Activated B cell treated with CpG ODN at 0.5 μM for 24 hours (primary cell): ENCODE measurements at regions of chr2 and their contacts with region 1.

Region 1: DNA sequence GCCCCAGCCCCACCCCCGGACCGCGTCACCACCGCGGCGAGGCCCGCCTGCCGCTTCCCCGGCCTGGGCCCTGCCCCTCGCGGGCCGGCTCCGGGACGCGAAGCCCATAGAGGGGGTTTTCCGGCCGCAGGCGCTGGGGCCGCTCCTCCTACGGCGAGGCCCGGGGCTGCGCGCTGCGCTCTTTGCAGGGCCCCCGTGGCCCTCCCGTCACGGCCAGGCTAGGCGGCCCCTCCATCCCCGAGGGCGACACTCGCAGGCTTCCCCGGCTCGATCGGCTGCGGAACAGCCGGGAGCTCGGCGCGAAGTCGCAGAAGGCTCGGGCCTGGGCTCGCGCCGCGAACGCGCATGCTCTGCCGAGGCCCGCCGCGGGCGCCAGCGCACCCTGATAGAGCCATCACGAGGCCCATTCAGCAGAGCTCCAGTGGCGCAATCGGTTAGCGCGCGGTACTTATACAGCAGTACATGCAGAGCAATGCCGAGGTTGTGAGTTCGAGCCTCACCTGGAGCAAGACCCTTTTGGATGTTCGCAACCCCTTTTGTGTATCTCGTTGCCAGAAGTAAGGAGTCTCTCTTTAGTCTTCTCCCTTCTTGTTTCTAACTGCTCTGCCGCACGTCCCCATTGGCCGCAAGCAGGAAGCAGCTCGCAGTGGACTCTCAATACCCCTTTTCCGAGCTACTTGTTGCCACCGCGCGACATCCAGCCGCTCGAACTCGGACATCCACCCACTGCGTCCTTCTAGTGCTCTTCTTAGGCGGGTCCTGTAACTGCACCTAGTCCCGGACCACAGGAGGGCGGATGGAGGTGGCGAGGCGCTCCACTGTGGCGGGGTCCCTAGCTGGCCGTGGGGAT is 18.0 kb upstream of the HAAO start:
- DNase-seq: peak; percentile 96
- ATAC-seq: peak; percentile 79
- H3K4me3 Mint-ChIP-seq: peak overlapping the region; percentile 94
- H3K27ac Mint-ChIP-seq: peak overlapping the region; percentile 99
- H3K4me1 Mint-ChIP-seq: peaks cover 26% of the 10 kb centered on the region
- H3K27me3 Mint-ChIP-seq: no peaks in the 10 kb centered on the region
- CTCF ChIP-seq: no peak

Region 2: GRCh38 chr2:41840702-41841551 is 969.4 kb before region 1 on chr2:
- CTCF ChIA-PET with region 1: no interaction called
- POLR2A ChIA-PET with region 1: no interaction called
- intact Hi-C with region 1: loop called (anchors 5 kb)
- DNase-seq: peak; percentile 88
- ATAC-seq: peak; percentile 98
- H3K4me3 Mint-ChIP-seq: peak overlapping the region; percentile 89
- H3K27ac Mint-ChIP-seq: peak overlapping the region; percentile 82
- H3K4me1 Mint-ChIP-seq: peaks cover 13% of the 10 kb centered on the region
- H3K27me3 Mint-ChIP-seq: peaks cover 24% of the 10 kb centered on the region
- CTCF ChIP-seq: peak; percentile 78

Region 3: DNA sequence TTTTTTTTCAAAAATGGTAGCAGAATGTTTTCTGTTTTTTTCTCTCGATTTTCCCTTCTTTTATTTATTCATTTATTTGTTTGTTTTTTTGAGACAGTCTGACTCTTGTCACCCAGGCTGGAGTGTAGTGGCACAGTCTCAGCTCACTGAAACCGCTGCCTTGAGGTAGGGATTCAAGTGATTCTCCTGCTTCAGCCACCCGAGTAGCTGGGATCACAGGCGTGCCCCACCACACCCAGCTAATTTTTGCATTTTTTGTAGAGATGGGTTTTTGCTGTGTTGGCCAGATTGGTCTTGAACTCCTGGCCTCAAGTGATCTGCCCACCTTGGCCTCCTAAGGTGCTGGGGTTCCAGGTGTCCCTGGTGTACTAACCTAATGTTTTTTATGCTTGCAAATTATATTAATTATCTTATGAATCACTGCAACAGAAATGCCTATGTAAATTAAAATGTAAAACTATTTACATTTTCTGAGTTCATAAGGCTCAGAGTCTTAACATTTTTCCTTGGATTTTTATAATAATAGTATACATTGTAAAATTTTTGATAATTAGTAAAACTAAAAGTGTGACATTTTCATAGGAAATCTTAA is 222.7 kb before region 1 on chr2:
- CTCF ChIA-PET with region 1: no interaction called
- POLR2A ChIA-PET with region 1: no interaction called
- intact Hi-C with region 1: no loop called
- DNase-seq: no peak
- ATAC-seq: no peak
- H3K4me3 Mint-ChIP-seq: no peak overlapping the region
- H3K27ac Mint-ChIP-seq: no peak overlapping the region
- H3K4me1 Mint-ChIP-seq: peaks cover 12% of the 10 kb centered on the region
- H3K27me3 Mint-ChIP-seq: no peaks in the 10 kb centered on the region
- CTCF ChIP-seq: no peak

Region 4: GRCh38 chr2:42663106-42663780 is 147.1 kb before region 1 on chr2:
- CTCF ChIA-PET with region 1: interaction called, 9 read pairs
- POLR2A ChIA-PET with region 1: interaction called, 9 read pairs
- intact Hi-C with region 1: loop called (anchors 5 kb)
- DNase-seq: peak; percentile 25
- ATAC-seq: peak; percentile 96
- H3K4me3 Mint-ChIP-seq: peak overlapping the region; percentile 12
- H3K27ac Mint-ChIP-seq: peak overlapping the region; percentile 10
- H3K4me1 Mint-ChIP-seq: peaks cover 17% of the 10 kb centered on the region
- H3K27me3 Mint-ChIP-seq: no peaks in the 10 kb centered on the region
- CTCF ChIP-seq: peak; percentile 67

Region 5: DNA sequence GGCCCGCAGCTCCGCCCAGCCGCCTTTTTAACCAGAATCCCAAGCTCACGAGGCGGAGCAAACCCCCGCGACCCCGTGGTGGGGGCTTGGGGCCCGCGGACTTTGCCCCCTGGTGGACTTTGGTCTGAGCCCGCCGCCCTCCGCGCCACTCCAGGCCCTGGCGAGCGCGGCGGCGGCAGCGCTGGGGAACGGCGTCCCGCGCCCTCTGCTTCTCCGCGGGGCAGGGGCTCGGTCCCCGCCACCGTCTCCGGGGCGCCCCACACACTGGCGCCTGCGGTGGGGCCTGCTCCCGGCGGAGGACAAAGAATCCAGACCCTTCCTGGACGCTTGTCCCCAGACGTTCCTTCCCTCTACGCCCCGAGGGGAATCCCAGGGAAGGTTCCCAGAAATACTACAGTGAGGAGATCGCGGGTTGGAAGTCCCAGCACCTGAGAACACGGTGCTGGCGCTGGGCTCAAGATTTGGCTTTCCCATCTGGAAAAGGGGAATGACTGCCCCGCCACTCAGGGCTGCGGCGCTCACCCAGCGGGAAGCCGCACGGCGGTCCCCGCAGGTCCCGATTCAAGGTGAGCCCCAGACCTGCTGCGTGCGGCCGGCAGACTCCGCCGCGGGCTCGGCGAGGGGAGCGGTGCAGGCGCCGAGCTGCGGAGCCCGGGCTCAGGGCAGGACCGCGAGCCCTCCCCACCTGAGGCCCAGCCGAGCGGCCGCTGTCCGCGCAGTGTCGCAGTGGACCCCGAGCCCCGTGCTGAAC is 17.6 kb before region 1 on chr2 and contains the start of gene HAAO:
- CTCF ChIA-PET with region 1: interaction called, 5 read pairs
- POLR2A ChIA-PET with region 1: interaction called, 146 read pairs
- intact Hi-C with region 1: loop called (anchors 1 kb)
- DNase-seq: peak; percentile 59
- ATAC-seq: peak; percentile 59
- H3K4me3 Mint-ChIP-seq: peak within 1 kb of the TSS; percentile 92
- H3K27ac Mint-ChIP-seq: peak within 1 kb of the TSS; percentile 93
- H3K4me1 Mint-ChIP-seq: peaks cover 47% of the 10 kb centered on the region
- H3K27me3 Mint-ChIP-seq: no peaks in the 10 kb centered on the region
- CTCF ChIP-seq: no peak
- total RNA-seq, gene HAAO: 11.4 TPM in 2 replicates

Region 6: DNA sequence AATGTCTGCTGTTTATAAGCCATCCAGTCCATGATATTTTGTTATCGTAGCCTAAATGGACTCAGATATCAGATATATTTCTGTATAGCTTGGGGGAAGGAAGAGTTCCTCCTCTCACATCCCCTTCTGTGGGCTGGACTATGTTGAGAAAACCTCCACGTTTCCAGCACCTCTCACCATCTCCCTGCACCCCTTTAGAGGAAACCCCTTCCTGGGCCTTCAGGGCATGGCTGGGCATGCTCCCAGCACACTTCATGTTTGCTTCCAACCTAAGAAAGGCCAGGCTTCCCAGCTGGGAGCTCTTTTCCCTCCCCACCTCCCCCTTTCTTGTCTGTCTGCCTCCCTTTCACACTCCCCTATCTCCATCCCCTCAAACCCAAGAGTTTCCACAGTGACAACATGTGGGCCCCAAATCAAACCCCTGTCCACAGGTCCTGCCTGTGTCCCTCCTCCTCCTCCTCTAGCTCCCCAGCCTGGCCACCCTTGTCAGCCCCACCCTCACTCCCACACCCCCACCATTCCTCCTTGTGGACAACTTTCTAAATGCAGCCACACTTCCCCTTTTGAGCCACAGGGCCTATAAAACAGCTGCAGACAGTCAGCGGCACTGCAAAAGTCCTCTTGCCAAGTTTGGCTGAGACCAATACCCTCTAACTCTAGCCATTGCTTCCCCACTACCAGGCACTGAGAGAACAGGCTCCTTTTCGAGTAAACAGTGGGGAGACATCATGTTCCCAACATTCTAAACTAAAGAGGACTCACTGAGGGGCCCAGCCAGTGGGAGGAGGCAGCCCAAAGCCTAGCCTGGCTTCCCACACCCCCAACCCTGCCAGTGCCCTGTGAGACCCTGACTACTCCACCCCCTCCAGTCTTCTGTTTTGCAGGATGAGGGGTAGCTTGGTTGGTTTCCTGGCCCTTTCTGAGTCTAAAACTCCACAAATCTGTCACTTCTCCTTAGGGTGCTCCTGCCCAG is 295.5 kb after region 1 on chr2:
- CTCF ChIA-PET with region 1: no interaction called
- POLR2A ChIA-PET with region 1: no interaction called
- intact Hi-C with region 1: loop called (anchors 1 kb)
- DNase-seq: no peak
- ATAC-seq: peak; percentile 67
- H3K4me3 Mint-ChIP-seq: peak overlapping the region; percentile 60
- H3K27ac Mint-ChIP-seq: peak overlapping the region; percentile 85
- H3K4me1 Mint-ChIP-seq: peaks cover 65% of the 10 kb centered on the region
- H3K27me3 Mint-ChIP-seq: no peaks in the 10 kb centered on the region
- CTCF ChIP-seq: no peak

Region 7: DNA sequence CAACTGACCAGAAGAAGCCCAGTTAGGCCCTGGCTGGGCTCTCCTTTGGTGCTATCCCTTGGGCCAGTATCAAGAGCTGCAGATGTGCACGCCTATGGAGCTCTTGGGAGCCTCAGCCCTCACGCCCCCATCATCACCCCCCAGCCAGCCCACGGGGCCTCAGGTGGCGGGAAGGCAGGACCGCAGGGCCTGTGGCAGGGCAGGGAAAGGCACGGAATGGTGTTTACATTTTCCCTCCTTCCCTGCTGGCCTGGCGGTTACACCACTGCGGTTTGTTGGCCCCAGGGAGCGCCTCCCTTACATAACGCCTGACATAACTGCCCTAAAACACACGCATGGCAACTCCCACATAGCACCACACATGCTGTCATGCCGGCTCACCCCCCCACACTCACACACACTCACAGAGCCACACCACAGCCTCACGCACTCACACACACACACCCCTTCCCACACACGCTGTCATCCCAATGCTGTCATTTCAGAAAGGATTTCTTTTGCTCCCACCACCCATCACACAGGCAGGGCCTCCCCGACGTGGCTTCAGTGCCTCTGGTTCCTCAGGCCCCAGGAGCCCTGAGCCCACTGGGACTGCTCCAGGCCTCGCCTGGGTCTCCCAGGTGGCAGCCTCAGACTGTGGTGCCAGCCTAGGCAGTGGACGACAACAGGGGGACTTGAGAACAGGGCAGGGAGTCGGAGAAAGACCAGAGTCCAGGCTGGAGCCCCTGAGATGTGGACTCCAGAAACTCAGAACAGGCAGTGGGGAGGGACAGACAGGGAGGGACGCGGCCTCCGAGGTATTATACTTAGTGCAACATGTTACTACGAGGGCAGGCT is 400.3 kb after region 1 on chr2:
- CTCF ChIA-PET with region 1: no interaction called
- POLR2A ChIA-PET with region 1: no interaction called
- intact Hi-C with region 1: no loop called
- DNase-seq: no peak
- ATAC-seq: peak; percentile 54
- H3K4me3 Mint-ChIP-seq: no peak overlapping the region
- H3K27ac Mint-ChIP-seq: no peak overlapping the region
- H3K4me1 Mint-ChIP-seq: peaks cover 34% of the 10 kb centered on the region
- H3K27me3 Mint-ChIP-seq: no peaks in the 10 kb centered on the region
- CTCF ChIP-seq: no peak

Region 8: DNA sequence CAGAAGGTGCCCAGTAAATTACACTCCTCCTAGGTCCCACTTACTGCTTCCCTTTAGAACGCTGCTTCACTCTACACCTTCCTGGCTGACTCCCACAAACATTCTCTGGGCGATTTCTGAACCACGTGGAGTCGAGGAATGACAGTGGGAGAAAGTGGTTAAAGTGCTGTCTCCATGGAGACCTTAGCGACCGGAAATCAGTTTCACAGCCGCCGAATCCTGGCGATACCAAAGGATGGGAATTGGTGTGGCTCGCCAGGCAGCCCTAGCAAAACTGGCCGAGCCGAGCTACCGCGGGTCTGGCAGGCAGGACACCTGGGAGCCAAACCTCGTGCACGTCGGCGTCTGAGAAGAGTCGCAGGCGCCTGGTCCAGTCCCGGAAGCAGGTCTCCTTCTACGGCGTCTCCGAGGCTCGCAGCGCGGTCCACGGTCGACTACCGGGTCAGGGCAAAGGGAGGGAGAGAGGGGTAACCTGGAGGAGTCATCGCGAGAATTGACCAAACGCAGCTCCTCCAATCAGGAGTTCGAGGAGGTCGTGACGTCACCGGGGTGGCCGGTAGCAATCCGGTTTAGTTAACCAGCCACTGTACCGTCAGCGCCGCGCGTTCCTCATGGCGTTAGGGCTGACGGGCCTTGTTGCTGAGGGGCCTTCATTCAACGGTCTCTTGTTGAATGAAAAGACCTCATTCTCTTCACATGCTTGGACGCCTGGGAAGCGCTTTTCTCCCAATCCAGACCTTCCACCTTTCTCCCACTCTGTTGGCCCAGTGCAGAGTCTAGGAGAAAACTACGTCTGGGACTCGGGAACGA is 785.5 kb after region 1 on chr2 and contains the start of gene THADA:
- CTCF ChIA-PET with region 1: no interaction called
- POLR2A ChIA-PET with region 1: interaction called, 25 read pairs
- intact Hi-C with region 1: loop called (anchors 1 kb)
- DNase-seq: peak; percentile 86
- ATAC-seq: peak; percentile 98
- H3K4me3 Mint-ChIP-seq: peak within 1 kb of the TSS; percentile 97
- H3K27ac Mint-ChIP-seq: peak within 1 kb of the TSS; percentile 95
- H3K4me1 Mint-ChIP-seq: peaks cover 27% of the 10 kb centered on the region
- H3K27me3 Mint-ChIP-seq: no peaks in the 10 kb centered on the region
- CTCF ChIP-seq: no peak
- total RNA-seq, gene THADA: 43.2 and 51.4 TPM in 2 replicates